Breast epithelium (tissue), 4 donors: ENCODE measurements at regions of chr19 and their contacts with region 1.

Region 1: DNA sequence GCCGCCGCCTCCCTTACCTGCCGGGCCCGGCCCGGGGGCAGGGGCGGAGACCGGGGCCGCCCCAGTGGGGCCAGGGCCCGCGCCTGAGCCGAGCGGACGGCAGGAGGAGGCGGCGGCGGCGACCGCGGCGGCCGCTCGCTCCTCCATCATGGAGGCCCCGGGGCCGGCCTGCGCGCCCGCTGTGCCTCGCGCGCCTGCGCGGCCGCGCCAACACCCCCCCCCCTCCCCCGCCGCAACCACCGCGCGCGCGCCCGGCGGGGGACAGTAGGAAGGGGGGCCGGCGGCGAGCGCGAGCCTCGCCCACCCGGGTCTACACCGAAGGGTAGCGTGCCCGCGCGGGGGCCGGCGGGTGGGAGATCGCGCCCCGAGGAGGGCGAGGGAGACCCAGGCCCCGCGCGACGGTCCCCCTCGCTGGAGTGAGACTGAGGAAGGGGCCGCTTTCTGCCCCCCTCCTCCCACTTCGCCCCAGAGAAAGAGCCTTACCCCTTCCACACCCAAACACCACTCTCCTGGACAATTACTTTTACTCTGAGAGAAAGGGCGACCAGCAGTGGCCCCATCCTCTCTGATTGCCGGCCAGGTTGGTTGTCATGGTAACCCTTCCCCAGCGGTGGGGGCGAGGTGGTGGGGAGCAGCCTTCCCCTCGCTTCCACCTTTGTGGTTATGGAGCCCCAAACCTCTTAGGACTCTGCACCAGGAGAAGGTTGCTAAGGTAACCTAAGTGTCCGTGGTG is at the start of gene STRN4:
- DNase-seq: no peak
- H3K4me3 ChIP-seq: peak within 1 kb of the TSS; percentile 94 to 99 (median 94)
- H3K27ac ChIP-seq: peak within 1 kb of the TSS; percentile 91 to 95
- H3K4me1 ChIP-seq: peaks cover 0 to 4% of the 10 kb centered on the region in 2 donors
- H3K27me3 ChIP-seq: no peaks in the 10 kb centered on the region
- CTCF ChIP-seq: no peak
- POLR2A ChIP-seq: no peak
- total RNA-seq, gene STRN4: 45.0 to 57.0 (median 53.7) TPM

Region 2: GRCh38 chr19:46845959-46846690 is 99.7 kb after region 1 on chr19:
- intact Hi-C with region 1: loop called (anchors 1 kb)
- DNase-seq: no peak
- H3K4me3 ChIP-seq: no peak overlapping the region
- H3K27ac ChIP-seq: no peak overlapping the region
- H3K4me1 ChIP-seq: peaks cover 0 to 5% of the 10 kb centered on the region in 2 donors
- H3K27me3 ChIP-seq: no peaks in the 10 kb centered on the region
- CTCF ChIP-seq: no peak
- POLR2A ChIP-seq: no peak